Right lobe of liver (tissue), 6 donors: ENCODE measurements at regions of chr5 and their contacts with region 1.

Region 1: GRCh38 chr5:14809369-14810155 is 62.0 kb downstream of the ANKH start:
- DNase-seq: peak; percentile 53 to 62 (median 62)
- ATAC-seq: peak; percentile 79 to 88 (median 84)
- H3K4me3 ChIP-seq: peak overlapping the region in 1 of 3 donors; percentile 22
- H3K27ac ChIP-seq: peak overlapping the region; percentile 68 to 72 (median 72)
- H3K4me1 ChIP-seq: peaks cover 0 to 20% (median 10%) of the 10 kb centered on the region in 4 donors
- H3K27me3 ChIP-seq: no peaks in the 10 kb centered on the region
- CTCF ChIP-seq: no peak
- POLR2A ChIP-seq: peak; percentile 25

Region 2: GRCh38 chr5:14871210-14872069 is 61.9 kb after region 1 on chr5 and contains the start of gene ANKH:
- intact Hi-C with region 1: loop called in 1 of 2 experiments (anchors 5 kb)
- DNase-seq: peak; percentile 85 to 88 (median 86)
- ATAC-seq: peak; percentile 60 to 90 (median 86)
- H3K4me3 ChIP-seq: peak within 1 kb of the TSS; percentile 64 to 73 (median 69)
- H3K27ac ChIP-seq: peak within 1 kb of the TSS; percentile 88 to 94 (median 91)
- H3K4me1 ChIP-seq: peaks cover 0 to 21% (median 4%) of the 10 kb centered on the region in 4 donors
- H3K27me3 ChIP-seq: no peaks in the 10 kb centered on the region
- CTCF ChIP-seq: peak in 2 of 4 donors; percentile 42 to 51
- POLR2A ChIP-seq: no peak
- total RNA-seq, gene ANKH: 38.5 to 121 (median 61.9) TPM